CD8-positive, alpha-beta memory T cell (primary cell): ENCODE measurements at regions of chr14 and their contacts with region 1.

Region 1: GRCh38 chr14:75293920-75294642 is 15.5 kb downstream of the FOS start:
- DNase-seq: peak; percentile 91 to 96 (median 95)
- H3K4me3 ChIP-seq: peak overlapping the region; percentile 75
- H3K4me3 Mint-ChIP-seq: peak overlapping the region; percentile 80 to 96 (median 91)
- H3K27ac ChIP-seq: peak overlapping the region; percentile 98
- H3K27ac Mint-ChIP-seq: peak overlapping the region; percentile 87 to 100 (median 98)
- H3K4me1 ChIP-seq: peaks cover 25% of the 10 kb centered on the region
- H3K4me1 Mint-ChIP-seq: peaks cover 22 to 26% (median 22%) of the 10 kb centered on the region in 3 donors
- H3K27me3 ChIP-seq: no peaks in the 10 kb centered on the region
- H3K27me3 Mint-ChIP-seq: peaks cover 0 to 8% of the 10 kb centered on the region in 2 donors

Region 2: GRCh38 chr14:75126679-75127473 is 167.2 kb before region 1 on chr14 and contains the start of gene NEK9:
- CTCF ChIA-PET with region 1: interaction called, 72 read pairs
- POLR2A ChIA-PET with region 1: interaction called, 4 read pairs
- DNase-seq: peak; percentile 80 to 93 (median 85)
- H3K4me3 ChIP-seq: peak within 1 kb of the TSS; percentile 99
- H3K4me3 Mint-ChIP-seq: peak within 1 kb of the TSS; percentile 95 to 98 (median 97)
- H3K27ac ChIP-seq: peak within 1 kb of the TSS; percentile 95
- H3K27ac Mint-ChIP-seq: peak within 1 kb of the TSS; percentile 97 to 99 (median 98)
- H3K4me1 ChIP-seq: peaks cover 36% of the 10 kb centered on the region
- H3K4me1 Mint-ChIP-seq: peaks cover 35 to 53% (median 52%) of the 10 kb centered on the region in 3 donors
- H3K27me3 ChIP-seq: no peaks in the 10 kb centered on the region
- H3K27me3 Mint-ChIP-seq: no peaks in the 10 kb centered on the region
- total RNA-seq, gene NEK9: 72.2 to 74.0 TPM

Region 3: DNA sequence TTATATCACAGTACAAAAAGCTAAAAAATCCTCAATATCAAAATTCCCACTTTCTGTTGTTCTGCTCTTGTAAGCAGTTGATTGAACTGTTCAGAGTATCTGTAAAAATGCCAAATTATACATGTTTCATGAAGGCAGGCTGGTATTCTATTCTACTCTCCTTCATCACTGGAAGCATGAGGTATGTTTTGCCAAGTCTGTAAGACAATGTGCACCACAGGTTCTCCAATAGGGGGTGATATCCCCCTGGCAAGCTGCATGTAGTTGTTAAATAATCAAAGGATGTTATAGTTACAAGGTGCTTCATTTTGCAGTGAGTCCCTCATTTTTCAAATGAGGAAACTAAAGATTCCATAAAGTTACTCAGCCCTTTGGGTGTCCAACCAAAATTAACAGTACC is 152.1 kb before region 1 on chr14:
- CTCF ChIA-PET with region 1: interaction called, 13 read pairs
- POLR2A ChIA-PET with region 1: no interaction called
- DNase-seq: peak in 3 of 5 donors; percentile 9 to 51 (median 40)
- H3K4me3 ChIP-seq: no peak overlapping the region
- H3K4me3 Mint-ChIP-seq: peak overlapping the region in 1 of 7 donors; percentile 24
- H3K27ac ChIP-seq: no peak overlapping the region
- H3K27ac Mint-ChIP-seq: peak overlapping the region; percentile 38 to 91 (median 80)
- H3K4me1 ChIP-seq: peaks cover 57% of the 10 kb centered on the region
- H3K4me1 Mint-ChIP-seq: peaks cover 55 to 82% (median 79%) of the 10 kb centered on the region in 3 donors
- H3K27me3 ChIP-seq: no peaks in the 10 kb centered on the region
- H3K27me3 Mint-ChIP-seq: no peaks in the 10 kb centered on the region

Region 4: DNA sequence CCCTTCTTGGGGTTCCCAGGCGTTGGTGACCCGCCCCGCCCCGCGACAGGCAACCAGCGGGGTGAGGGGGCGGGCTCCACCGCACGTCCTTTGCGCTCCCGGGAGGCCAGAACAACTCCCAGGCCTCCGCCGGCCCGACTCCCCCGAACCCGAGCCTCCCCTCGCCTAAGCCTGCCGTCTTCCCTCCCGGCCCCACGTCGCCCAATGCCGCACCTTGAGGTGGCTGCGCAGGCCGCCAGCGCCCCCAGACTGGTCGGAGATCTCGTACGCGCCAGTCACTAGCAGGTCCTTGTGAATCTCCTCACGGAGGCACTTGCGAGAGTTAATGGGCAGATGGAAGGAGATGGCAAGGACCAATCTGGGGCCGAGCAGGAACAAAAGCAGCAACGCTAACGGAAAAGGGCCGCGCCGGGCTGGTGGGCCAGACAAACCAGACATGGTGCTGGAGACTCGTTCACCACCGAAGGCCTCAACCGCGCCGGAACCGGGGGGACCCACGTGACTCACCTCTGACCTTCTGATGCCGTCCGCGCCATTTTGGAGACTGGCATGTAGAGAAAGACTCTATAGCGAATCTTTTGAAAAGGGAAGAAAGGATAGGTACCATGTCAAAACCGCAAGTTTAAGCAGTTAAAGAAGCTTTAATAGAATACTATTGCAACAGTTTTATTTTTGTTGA is 117.8 kb before region 1 on chr14 and contains the start of gene TMED10:
- CTCF ChIA-PET with region 1: interaction called, 16 read pairs
- POLR2A ChIA-PET with region 1: interaction called, 13 read pairs
- DNase-seq: peak; percentile 87 to 95 (median 94)
- H3K4me3 ChIP-seq: peak within 1 kb of the TSS; percentile 87
- H3K4me3 Mint-ChIP-seq: peak within 1 kb of the TSS; percentile 86 to 98 (median 90)
- H3K27ac ChIP-seq: peak within 1 kb of the TSS; percentile 98
- H3K27ac Mint-ChIP-seq: peak within 1 kb of the TSS; percentile 97 to 100 (median 98)
- H3K4me1 ChIP-seq: peaks cover 24% of the 10 kb centered on the region
- H3K4me1 Mint-ChIP-seq: peaks cover 32 to 55% (median 53%) of the 10 kb centered on the region in 3 donors
- H3K27me3 ChIP-seq: no peaks in the 10 kb centered on the region
- H3K27me3 Mint-ChIP-seq: no peaks in the 10 kb centered on the region
- total RNA-seq, gene TMED10: 178 TPM

Region 5: GRCh38 chr14:75230140-75231045 is 63.7 kb before region 1 on chr14:
- CTCF ChIA-PET with region 1: interaction called, 43 read pairs
- POLR2A ChIA-PET with region 1: interaction called, 5 read pairs
- DNase-seq: peak; percentile 44 to 82 (median 54)
- H3K4me3 ChIP-seq: peak overlapping the region; percentile 14
- H3K4me3 Mint-ChIP-seq: peak overlapping the region; percentile 2 to 76 (median 65)
- H3K27ac ChIP-seq: peak overlapping the region; percentile 45
- H3K27ac Mint-ChIP-seq: peak overlapping the region; percentile 66 to 98 (median 86)
- H3K4me1 ChIP-seq: peaks cover 58% of the 10 kb centered on the region
- H3K4me1 Mint-ChIP-seq: peaks cover 55 to 59% (median 58%) of the 10 kb centered on the region in 3 donors
- H3K27me3 ChIP-seq: no peaks in the 10 kb centered on the region
- H3K27me3 Mint-ChIP-seq: peaks cover 0 to 1% of the 10 kb centered on the region in 2 donors

Region 6: GRCh38 chr14:75249251-75249957 is 44.7 kb before region 1 on chr14:
- CTCF ChIA-PET with region 1: interaction called, 11 read pairs
- POLR2A ChIA-PET with region 1: interaction called, 5 read pairs
- DNase-seq: peak; percentile 73 to 96 (median 93)
- H3K4me3 ChIP-seq: peak overlapping the region; percentile 37
- H3K4me3 Mint-ChIP-seq: peak overlapping the region; percentile 40 to 78 (median 67)
- H3K27ac ChIP-seq: peak overlapping the region; percentile 67
- H3K27ac Mint-ChIP-seq: peak overlapping the region; percentile 81 to 98 (median 94)
- H3K4me1 ChIP-seq: peaks cover 58% of the 10 kb centered on the region
- H3K4me1 Mint-ChIP-seq: peaks cover 50 to 63% (median 60%) of the 10 kb centered on the region in 3 donors
- H3K27me3 ChIP-seq: no peaks in the 10 kb centered on the region
- H3K27me3 Mint-ChIP-seq: no peaks in the 10 kb centered on the region

Region 7: DNA sequence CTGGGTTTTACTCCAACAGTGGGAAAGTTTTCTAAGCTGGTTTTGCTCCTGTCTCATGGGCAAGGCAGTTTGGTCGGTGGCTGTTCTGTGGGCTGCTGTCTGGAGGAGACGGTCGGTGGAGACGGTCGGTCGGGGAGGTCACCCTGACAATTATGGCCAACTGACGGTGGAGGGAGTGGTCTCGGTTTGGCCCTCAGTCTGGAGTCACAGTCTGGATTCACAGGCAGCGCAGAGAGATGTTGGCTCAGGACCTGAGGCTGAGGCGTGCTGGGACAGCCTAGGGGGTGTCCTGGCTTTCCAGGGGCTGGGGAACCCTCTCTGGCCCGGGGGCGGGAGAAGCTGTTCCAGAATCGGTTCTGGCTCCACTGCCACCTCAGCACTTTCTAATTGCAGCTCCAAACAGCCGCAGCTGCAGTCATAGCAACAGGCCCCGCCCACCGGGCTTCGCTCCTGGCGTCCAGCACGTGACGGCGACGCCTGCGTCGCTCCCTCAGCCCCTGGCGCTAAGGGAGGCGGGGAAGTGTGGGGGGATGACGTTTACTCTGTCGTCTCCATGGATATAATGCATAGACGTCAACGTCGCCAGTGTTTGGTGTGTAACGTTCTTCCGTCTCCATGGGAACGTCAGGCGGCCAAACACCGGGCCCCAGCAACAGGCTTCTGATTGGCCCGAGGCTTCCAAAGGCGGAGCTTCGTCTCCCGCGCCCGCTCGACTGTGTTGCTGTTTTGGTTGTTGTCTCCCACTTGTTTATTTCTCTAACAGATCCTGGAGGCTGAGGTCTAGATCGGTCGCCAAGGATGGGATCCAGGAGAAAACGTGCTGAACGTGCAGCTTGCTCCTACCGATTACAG is 35.2 kb before region 1 on chr14:
- CTCF ChIA-PET with region 1: interaction called, 15 read pairs
- POLR2A ChIA-PET with region 1: interaction called, 13 read pairs
- DNase-seq: peak; percentile 100
- H3K4me3 ChIP-seq: peak overlapping the region; percentile 75
- H3K4me3 Mint-ChIP-seq: peak overlapping the region; percentile 77 to 95 (median 89)
- H3K27ac ChIP-seq: peak overlapping the region; percentile 99
- H3K27ac Mint-ChIP-seq: peak overlapping the region; percentile 99 to 100 (median 99)
- H3K4me1 ChIP-seq: peaks cover 24% of the 10 kb centered on the region
- H3K4me1 Mint-ChIP-seq: peaks cover 22 to 35% (median 31%) of the 10 kb centered on the region in 3 donors
- H3K27me3 ChIP-seq: no peaks in the 10 kb centered on the region
- H3K27me3 Mint-ChIP-seq: peaks cover 5 to 8% of the 10 kb centered on the region in 2 donors

Region 8: GRCh38 chr14:75333606-75334548 is 39.8 kb after region 1 on chr14:
- CTCF ChIA-PET with region 1: no interaction called
- POLR2A ChIA-PET with region 1: no interaction called
- DNase-seq: peak; percentile 20 to 79 (median 61)
- H3K4me3 ChIP-seq: peak overlapping the region; percentile 54
- H3K4me3 Mint-ChIP-seq: peak overlapping the region; percentile 82 to 92 (median 87)
- H3K27ac ChIP-seq: peak overlapping the region; percentile 52
- H3K27ac Mint-ChIP-seq: peak overlapping the region; percentile 84 to 99 (median 96)
- H3K4me1 ChIP-seq: peaks cover 16% of the 10 kb centered on the region
- H3K4me1 Mint-ChIP-seq: peaks cover 26 to 34% (median 33%) of the 10 kb centered on the region in 3 donors
- H3K27me3 ChIP-seq: no peaks in the 10 kb centered on the region
- H3K27me3 Mint-ChIP-seq: peaks cover 0 to 7% of the 10 kb centered on the region in 2 donors

Region 9: DNA sequence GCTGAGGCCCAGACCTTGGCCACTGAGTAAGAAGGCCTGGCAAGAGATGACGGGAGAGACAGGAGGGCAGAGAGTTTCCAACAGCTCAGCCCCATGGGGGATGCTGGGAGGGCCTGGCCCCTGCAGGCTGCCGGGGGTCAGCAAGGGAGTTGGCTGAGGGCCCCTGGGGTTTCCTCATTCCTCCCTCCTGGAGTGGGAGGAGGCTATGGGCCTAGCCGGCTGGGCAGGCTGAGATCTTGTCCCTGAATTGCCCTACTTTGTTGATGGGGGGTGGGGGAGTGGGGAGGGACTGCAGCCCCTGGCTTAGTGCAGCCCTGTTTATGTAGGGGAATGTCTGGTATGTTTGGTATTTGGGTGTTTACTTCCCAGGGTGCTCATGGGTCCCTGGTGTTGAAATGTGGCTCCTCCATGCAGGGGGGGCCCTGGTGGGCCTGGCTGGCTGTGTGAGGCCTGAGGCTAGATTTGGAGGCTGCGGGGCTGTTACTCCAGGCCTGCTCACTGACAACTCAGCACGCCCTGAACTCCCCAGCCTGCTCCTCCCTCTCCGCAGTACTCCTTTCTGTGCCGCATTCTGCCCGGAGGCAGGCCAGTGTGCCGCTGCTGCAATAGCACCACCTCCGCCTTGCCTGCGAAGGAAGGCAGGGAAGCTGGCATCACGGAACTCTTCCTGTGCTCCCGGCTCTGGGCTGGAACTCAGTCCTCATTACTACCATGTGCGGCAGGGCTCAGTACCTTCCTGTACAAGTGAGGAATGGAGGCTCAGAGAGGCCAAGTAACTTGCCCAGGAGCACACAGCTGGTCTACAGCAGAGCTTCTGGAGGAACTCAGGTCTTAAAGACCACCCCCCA is 159.0 kb after region 1 on chr14:
- CTCF ChIA-PET with region 1: no interaction called
- POLR2A ChIA-PET with region 1: no interaction called
- DNase-seq: no peak
- H3K4me3 ChIP-seq: no peak overlapping the region
- H3K4me3 Mint-ChIP-seq: no peak overlapping the region
- H3K27ac ChIP-seq: no peak overlapping the region
- H3K27ac Mint-ChIP-seq: peak overlapping the region in 1 of 8 donors; percentile 42
- H3K4me1 ChIP-seq: no peaks in the 10 kb centered on the region
- H3K4me1 Mint-ChIP-seq: no peaks in the 10 kb centered on the region
- H3K27me3 ChIP-seq: no peaks in the 10 kb centered on the region
- H3K27me3 Mint-ChIP-seq: peaks cover 11 to 17% of the 10 kb centered on the region in 2 donors